ENCODE measurements at regions of chr3 and their contacts with region 1.

Region 1: DNA sequence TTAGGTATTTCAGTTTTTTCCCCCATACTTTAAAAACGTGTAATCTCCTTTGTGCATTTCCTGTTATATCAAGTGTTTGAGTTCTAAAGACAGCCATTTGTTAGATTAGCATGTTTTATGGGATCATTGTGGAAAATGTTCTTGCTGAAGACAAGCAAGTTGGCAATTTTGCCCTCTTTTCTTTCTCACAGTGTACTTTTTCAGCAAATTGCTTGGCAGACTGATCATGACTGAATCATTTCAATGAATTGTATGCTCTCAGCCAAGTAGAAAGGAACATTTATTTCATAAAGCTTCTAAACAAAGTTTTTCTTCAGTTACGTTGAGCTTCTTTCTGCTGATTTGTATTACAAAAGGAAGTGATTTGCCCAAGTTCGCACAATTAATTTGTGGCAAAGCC is 51.6 kb downstream of the ATG7 start:
- DNase-seq: no peak
- H3K4me3 ChIP-seq: no peak overlapping the region
- H3K27ac ChIP-seq: peak overlapping the region in 3 of 5 donors; percentile 3 to 15 (median 9)
- H3K4me1 ChIP-seq: peaks cover 0 to 8% of the 10 kb centered on the region in 2 donors
- H3K27me3 ChIP-seq: no peaks in the 10 kb centered on the region
- CTCF ChIP-seq: no peak
- POLR2A ChIP-seq: no peak

Region 2: DNA sequence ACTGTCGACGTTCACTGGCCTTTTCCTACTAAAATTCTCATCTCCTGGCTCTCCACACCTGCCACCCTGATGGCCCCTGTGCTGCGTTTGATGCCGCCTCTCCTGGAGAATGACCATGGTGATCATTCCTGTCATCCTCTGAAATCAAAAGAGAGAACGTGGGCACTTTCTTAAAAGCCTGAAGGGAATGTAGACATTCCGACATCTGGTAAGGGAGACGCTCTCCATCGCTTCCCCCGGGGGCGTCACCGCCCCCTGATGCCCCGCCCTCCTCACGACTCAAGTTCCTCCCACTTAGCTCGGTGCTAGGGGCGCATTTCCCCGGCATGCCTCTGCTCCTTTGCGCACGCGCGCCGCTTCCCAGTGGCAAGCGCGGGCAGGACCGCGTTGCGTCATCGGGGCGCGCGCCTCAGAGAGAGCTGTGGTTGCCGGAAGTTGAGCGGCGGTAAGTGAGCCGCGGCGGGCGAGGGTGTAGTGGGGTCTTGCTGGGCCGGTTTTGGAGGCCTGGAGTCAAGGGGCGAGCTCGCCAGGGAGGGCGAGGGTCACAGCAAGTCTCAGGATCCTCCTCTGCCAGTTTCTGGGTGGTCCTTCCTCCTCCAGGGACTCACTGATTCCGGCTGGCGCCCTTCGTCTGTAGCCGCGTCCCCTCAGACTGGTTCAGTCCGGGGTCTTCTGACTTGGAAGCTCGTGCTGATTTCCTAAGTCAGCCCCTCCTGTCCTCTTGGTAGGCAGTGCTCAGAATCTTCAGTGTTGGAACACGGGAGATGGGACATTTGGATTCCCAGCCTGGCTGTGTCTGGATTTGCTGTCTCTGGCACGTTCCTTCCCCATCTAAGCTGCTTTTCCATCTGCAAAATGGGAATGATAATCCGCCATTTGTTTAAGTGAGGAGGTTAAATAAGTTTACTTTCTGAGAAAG is 51.6 kb before region 1 on chr3 and contains the start of gene ATG7:
- intact Hi-C with region 1: loop called in 1 of 2 experiments (anchors 10 kb)
- DNase-seq: peak; percentile 96 to 99 (median 98)
- H3K4me3 ChIP-seq: peak within 1 kb of the TSS; percentile 38 to 88 (median 78)
- H3K27ac ChIP-seq: peak within 1 kb of the TSS in 4 of 5 donors; percentile 79 to 90 (median 83)
- H3K4me1 ChIP-seq: peaks cover 12 to 14% of the 10 kb centered on the region in 2 donors
- H3K27me3 ChIP-seq: no peaks in the 10 kb centered on the region
- CTCF ChIP-seq: peak in 2 of 6 experiments; percentile 20 to 34
- POLR2A ChIP-seq: peak; percentile 78 to 87
- total RNA-seq, gene ATG7: 29.5 to 118 (median 42.7) TPM